AG04449 (cell line): ENCODE measurements at regions of chr14 and their contacts with region 1.

Region 1: DNA sequence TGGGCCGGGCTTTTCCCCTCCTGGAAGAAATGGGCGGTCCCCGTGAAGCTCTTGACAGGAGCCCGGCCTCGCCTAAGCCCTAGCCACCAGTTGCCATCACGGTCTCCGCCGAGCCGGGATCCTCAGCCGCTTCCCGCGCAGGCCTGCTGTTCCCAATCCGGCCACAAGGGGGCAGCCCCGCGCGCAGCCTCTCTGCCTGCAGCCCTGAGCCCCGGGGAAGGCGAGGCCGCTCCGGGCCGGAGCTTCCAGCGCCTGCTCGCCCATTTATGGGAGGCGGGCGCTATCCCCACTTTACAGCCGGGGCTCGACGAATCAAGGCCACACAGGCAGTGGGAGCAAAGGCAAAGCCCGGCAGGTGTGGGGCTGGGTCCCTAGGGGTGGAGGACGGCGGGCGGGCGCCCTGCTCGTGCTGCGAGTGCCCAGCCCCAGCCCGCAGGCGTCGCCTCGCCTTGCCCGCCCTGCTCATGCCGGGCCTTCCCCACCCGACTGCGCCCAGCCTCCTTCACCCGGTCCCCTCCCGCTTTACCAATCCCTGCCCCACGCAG is 61.5 kb downstream of the LGMN start:
- DNase-seq: no peak
- H3K4me3 ChIP-seq: peak overlapping the region; percentile 30; the same call in 1 of the 2 replicates
- CTCF ChIP-seq: peak; percentile 99

Region 2: GRCh38 chr14:92121670-92122350 is 565.2 kb before region 1 on chr14 and contains the starts of genes CPSF2 and NDUFB1:
- CTCF ChIA-PET with region 1: interaction called, 10 read pairs
- POLR2A ChIA-PET with region 1: no interaction called
- DNase-seq: no peak
- H3K4me3 ChIP-seq: peak within 1 kb of the TSS; percentile 98
- CTCF ChIP-seq: no peak

Region 3: GRCh38 chr14:92456215-92457015 is 230.6 kb before region 1 on chr14:
- CTCF ChIA-PET with region 1: interaction called, 11 read pairs
- POLR2A ChIA-PET with region 1: no interaction called
- DNase-seq: peak; percentile 14
- H3K4me3 ChIP-seq: no peak overlapping the region
- CTCF ChIP-seq: peak; percentile 80

Region 4: DNA sequence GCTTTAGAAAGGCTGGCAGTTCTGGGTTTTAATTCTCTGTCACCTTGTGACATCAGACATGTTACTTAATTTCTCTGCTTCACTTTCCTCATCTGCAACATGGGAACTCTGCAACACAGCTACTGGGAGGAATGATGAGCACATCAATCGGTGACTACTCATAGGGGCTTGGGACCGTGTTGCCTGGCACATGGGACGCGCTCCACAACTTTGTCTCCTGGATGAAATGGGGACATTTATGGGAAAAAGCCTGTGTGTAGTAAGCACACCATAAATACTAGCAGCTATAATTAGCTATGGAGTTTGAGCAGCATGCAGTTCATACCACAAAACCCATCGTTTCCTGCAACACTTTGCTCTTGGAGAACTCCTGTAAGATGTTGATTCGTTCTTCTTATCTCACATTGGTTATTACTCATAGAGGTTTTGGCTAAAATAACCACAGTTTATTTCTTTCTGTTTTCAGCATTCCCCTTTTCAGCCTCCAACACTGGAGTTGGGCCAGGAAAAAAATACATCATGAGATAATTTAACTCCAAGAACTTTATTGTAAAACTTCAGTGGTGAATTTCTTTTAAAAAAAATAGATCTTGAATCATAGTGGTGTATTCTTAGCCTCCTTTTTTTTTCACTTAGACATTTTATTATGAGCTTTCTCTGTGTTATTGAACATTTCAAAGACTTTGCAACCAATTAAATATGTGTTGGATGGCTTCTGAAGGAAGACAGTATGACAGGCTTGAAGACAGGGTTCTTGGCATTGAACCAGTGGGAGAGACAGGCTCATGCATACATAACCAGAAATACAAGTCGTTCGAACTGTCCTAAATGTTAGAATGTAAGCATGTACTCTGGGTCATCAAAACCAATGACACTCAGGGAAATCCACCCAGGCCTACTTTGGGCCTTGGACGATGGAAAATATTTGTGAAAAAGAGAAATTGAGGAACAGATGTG is 100.7 kb before region 1 on chr14:
- CTCF ChIA-PET with region 1: interaction called, 22 read pairs
- POLR2A ChIA-PET with region 1: no interaction called
- DNase-seq: peak; percentile 99
- H3K4me3 ChIP-seq: no peak overlapping the region
- CTCF ChIP-seq: no peak

Region 5: GRCh38 chr14:92670160-92670559 is 16.8 kb before region 1 on chr14:
- CTCF ChIA-PET with region 1: interaction called, 27 read pairs
- POLR2A ChIA-PET with region 1: interaction called, 3 read pairs
- DNase-seq: no peak
- H3K4me3 ChIP-seq: no peak overlapping the region
- CTCF ChIP-seq: peak; percentile 23

Region 6: GRCh38 chr14:92704036-92704804 is 17.2 kb after region 1 on chr14:
- CTCF ChIA-PET with region 1: interaction called, 58 read pairs
- POLR2A ChIA-PET with region 1: no interaction called
- DNase-seq: no peak
- H3K4me3 ChIP-seq: no peak overlapping the region
- CTCF ChIP-seq: no peak

Region 7: DNA sequence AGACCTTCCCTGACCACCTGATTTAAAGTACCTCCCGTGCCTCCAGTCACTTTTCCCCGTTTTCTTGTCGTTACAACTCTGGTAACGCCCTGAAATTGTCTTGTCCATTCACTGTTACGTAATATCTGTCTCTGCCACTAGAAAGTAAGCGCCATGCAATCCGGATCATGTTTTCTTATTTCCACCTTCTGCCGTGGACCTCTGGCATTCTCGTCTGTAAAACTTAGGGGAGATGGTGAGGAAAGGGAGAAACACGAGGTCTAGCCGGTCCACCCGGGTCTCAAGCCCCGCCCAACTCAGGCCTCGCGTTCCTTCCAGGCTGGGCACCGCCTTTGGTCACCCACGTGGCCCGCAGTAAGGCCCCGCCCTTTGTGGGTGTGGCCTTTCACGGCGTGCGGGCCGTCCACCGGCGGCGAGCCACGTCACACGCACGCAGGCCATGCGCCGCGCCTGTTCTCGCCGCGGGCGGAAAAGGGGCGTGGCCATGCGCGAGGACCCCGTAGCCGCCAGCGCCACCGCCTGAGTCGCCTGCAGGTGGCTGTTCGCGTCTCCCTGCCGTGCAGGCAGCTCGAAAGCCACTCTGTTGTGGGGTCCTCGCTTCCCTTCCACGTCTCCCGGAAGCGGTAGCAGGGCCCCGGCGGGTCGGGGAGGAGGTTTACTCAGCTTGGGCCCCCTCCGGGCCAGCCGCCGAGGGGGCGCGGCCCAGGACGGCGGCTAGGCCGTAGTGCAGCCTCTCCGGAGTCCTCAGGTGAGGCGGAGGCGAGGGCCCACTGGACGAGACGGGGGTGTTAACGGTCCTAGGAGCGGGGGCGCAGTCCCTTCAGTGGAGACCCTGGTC is 107.0 kb after region 1 on chr14 and contains the start of gene GOLGA5:
- CTCF ChIA-PET with region 1: interaction called, 402 read pairs
- POLR2A ChIA-PET with region 1: no interaction called
- DNase-seq: peak; percentile 86
- H3K4me3 ChIP-seq: peak within 1 kb of the TSS; percentile 100
- CTCF ChIP-seq: no peak

Region 8: DNA sequence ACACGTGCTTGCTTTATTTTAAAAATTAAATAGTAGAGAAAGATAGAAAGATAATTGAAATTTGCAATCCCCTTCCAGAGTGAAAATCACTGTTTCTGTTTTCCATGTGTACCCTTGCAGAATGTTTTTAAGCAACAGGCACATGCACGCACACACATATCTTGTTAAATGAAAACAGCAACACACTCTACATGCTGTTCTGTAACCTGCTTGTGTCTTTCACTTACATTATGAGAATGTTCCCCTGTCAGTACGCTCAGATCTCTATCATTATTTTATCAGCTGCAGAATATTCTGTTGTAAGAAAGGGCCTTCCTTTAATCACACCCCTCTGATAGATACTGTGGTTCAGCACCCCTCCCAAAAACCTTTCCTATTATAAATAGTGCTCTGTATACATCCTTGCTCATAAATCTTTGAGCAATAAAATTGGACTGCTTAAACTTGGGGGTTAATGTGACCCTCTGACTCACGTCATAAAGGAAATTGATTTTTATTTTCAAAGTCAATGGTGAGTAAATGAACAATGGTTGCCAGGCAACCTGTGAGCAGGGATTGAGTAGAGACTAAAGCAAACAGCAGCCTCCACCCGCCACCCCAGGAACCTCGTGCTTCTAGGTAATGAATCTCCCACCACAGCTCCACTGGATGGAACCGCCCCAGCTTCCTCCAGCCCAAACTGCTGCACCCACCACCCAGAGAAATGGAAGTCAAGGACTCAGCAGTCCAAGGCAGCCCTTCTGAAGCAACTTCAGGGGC is 204.0 kb after region 1 on chr14:
- CTCF ChIA-PET with region 1: no interaction called
- POLR2A ChIA-PET with region 1: no interaction called
- DNase-seq: no peak
- H3K4me3 ChIP-seq: no peak overlapping the region
- CTCF ChIP-seq: no peak